Activated naive CD8-positive, alpha-beta T cell treated with anti-CD3 and anti-CD28 coated beads, Interleukin-2, amount 10 ng/mL, durations not matched to agents 7 days and 5 days (primary cell): ENCODE measurements at regions of chr6 and their contacts with region 1.

Region 1: GRCh38 chr6:28266962-28267694 is at the start of gene ZSCAN26:
- DNase-seq: peak; percentile 85
- ATAC-seq: peak; percentile 98
- H3K4me3 Mint-ChIP-seq: no peak within 1 kb of the TSS
- H3K27ac Mint-ChIP-seq: no peak within 1 kb of the TSS
- H3K4me1 Mint-ChIP-seq: peaks cover 15% of the 10 kb centered on the region
- H3K27me3 Mint-ChIP-seq: no peaks in the 10 kb centered on the region
- total RNA-seq, gene ZSCAN26: 13.1 to 14.5 TPM

Region 2: DNA sequence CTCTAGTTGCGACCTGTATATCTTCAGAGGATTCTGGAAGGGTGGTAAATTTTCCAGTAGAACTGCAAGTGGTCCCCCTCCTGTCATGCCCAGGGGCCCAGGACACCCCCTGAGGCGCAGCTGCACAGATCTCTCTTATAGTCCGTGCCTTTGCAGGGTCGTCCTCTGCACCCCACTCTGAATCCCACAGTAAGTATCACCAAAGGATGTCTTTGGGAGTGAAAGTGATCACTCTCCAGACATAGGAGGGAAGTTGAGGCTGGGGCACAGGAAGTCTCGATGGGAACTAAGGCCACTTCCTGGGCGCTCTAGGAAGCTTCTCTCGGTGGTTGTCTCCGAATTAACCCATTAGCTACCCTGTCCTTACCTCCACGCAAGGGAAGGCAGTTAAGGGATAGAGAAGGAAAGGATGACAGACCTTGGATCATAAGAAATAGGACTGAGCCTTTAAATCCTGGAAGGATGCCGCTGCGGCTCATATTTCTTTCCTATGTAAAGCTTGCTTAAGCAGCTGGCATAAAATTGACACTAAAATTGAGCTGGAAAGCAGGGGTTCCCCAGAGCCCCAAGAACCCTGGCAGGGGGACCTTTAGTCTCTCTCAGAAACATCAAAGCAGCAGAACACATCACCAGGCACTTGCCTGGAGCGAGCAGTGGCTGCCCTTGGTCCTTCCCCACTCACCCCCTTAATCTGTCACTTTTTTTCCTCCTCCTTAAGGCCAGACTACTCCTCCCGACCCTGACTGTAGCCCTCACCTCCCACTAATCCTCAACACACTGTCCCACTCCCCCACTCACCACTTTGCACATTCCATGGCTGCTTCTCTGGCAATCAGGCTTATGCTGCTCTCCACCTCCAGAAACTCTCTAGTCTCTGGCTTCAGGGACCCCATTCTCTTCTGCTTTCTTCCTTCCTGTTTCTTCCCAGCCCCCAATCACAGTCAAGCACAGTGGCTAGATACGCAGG is 14.8 kb before region 1 on chr6 and contains the start of gene ZKSCAN4:
- POLR2A ChIA-PET with region 1: interaction called, 16 read pairs
- DNase-seq: peak; percentile 66
- ATAC-seq: peak; percentile 66
- H3K4me3 Mint-ChIP-seq: peak within 1 kb of the TSS; percentile 91
- H3K27ac Mint-ChIP-seq: peak within 1 kb of the TSS; percentile 94
- H3K4me1 Mint-ChIP-seq: peaks cover 27% of the 10 kb centered on the region
- H3K27me3 Mint-ChIP-seq: peaks cover 2% of the 10 kb centered on the region
- total RNA-seq, gene ZKSCAN4: 10.5 to 11.3 TPM

Region 3: DNA sequence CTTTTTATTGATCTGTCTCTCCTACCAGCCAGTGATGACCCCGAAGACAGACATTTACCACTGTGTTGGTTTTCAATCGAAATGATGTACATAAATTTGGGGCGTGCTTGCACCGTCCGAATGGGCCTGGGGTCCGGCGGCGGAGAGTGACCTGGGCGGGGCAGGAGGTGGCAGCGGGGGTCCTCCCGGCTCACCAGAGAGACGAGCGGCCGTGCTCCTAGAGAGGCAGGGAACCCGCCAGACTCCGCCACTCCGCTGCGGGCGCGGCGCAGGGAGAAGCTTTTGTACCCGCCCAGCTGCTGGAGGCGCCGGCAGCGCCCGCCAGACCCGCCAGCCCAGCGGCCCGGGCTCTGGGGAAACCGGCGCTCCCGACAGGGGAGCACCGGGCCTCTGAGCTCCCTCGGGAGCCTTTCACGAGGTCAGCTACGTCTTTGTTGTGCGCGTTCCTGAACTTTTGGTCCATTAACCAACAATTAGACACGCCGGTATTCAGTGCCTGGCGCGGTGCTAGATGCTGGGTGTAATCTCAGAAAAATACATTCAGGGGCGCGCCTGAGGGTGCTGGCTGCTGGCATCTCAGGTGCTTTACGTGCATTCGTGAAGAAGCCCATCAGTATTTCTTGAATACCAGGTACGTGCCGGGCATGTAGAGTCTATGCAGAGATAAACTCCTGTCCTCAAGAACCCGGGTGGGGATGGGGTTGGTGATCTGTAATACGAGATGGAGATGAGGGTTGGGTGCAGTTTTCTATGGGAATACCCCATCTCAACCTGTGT is 14.3 kb after region 1 on chr6 and contains the start of gene PGBD1:
- POLR2A ChIA-PET with region 1: interaction called, 17 read pairs
- DNase-seq: peak; percentile 78
- ATAC-seq: peak; percentile 94
- H3K4me3 Mint-ChIP-seq: peak within 1 kb of the TSS; percentile 89
- H3K27ac Mint-ChIP-seq: peak within 1 kb of the TSS; percentile 24
- H3K4me1 Mint-ChIP-seq: peaks cover 15% of the 10 kb centered on the region
- H3K27me3 Mint-ChIP-seq: peaks cover 5% of the 10 kb centered on the region
- total RNA-seq, gene PGBD1: 3.4 to 3.9 TPM

Region 4: DNA sequence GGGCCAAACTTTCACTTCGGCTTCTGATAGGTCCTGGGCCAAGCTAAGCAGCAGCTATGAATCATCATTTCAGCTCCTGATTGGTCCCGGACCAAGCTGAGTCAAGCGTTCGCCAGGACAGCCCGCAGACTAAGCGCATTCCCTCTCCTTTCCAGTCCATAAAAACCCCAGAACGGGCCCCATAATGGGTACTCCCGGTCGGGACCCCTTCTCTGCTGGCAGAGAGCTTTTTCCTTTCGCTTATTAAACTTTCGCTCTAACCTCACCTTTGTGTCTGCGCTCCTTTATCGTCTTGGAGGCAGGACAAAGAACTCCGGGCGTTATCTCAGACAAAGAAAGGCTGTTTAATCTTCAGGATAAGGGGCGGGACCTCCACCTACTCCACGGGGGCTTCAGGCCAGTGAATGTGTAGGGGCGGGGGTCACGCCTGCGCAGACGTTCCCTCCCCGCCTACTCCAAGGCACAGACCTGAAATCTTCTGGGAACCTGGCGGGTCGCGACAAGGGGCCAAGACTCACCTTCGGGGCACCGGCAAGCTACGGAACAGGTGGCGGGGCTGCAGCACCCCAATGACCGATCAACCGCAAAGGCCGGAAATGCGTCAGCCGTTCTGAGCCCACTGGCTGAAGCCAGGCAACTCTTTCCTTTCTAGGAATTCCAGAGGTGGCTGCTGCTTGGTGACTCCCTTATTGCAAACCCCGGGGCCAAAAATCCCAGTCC is 68.6 kb after region 1 on chr6 and contains the start of gene ZSCAN31:
- POLR2A ChIA-PET with region 1: interaction called, 13 read pairs
- DNase-seq: peak; percentile 76
- ATAC-seq: peak; percentile 94
- H3K4me3 Mint-ChIP-seq: no peak within 1 kb of the TSS
- H3K27ac Mint-ChIP-seq: no peak within 1 kb of the TSS
- H3K4me1 Mint-ChIP-seq: peaks cover 6% of the 10 kb centered on the region
- H3K27me3 Mint-ChIP-seq: no peaks in the 10 kb centered on the region
- total RNA-seq, gene ZSCAN31: 1.9 to 2.0 TPM

Region 5: DNA sequence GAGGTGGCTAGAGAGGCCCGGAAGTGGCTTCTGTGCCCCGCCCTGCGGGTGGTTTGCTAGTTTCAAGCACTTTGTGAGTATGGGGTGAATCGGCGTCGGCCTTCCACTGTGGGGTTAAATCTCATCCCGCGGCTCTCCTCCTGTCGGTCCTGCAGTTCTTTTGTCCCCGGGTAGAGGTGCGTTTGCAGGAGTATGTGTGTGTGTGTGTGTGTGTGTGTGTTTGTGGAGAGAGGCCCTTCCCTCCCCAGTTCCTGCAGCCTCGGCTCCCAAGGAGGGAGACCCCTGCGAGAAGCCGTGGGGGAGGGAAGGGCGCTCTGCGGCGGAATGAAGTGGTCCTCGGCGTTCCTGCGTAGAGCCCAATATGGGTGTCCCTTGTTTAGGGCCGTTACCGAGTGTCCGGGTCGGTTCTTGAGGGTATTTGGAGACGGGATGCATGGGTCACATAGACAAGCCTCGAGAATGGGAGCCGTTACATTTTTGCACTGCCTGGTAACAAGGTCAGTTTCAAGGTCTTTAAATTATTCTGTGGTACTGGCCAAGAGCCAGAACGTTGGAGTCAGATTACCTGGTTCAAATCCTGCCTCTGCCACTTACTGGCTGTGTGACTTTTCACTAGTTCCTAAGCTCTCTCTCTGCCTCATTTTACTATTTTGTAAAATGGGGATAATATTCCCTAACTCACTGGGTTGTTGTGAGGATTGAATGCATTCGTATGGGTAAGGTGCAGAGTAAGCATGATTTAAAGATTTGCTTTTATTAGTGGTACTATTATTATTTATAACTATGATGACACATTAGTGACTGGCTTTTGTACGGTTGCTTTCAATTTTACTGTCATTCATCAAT is 83.0 kb after region 1 on chr6 and contains the start of gene ZKSCAN3:
- POLR2A ChIA-PET with region 1: interaction called, 10 read pairs
- DNase-seq: peak; percentile 85
- ATAC-seq: peak; percentile 99
- H3K4me3 Mint-ChIP-seq: peak within 1 kb of the TSS; percentile 100
- H3K27ac Mint-ChIP-seq: peak within 1 kb of the TSS; percentile 99
- H3K4me1 Mint-ChIP-seq: peaks cover 22% of the 10 kb centered on the region
- H3K27me3 Mint-ChIP-seq: peaks cover 13% of the 10 kb centered on the region
- total RNA-seq, gene ZKSCAN3: 7.0 to 7.6 TPM